ENCODE measurements at regions of chr5 and their contacts with region 1.

Region 1: DNA sequence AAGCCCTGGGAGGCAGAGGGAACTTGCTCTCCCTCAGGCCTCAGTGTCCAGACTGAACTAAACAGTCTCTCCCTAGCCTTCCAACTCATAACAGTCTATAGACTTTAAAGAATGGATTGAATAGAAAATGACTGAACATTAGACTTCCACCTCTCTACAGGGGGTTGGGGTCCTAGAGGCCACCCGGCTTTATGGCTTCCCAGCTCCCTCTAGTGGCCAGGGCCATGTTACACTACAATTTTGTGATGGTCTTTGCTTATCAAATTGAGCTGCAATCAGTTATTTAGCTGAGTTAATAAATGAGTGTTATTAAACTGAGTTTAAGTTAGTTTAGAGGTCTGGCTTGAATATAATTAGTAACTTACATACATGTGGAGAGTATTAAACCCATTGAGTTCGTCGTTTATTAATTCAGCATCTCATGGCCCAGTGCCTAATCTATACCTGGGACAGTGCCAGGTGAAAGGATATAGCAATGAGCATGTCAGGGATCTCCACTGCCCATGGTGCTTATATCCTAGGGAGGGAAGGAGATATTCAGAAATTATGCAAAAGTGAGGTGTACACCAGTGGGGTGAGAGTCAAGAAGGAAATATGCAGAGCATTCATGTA is 105.2 kb downstream of the SH3TC2 start:
- DNase-seq: peak; percentile 33
- H3K4me3 ChIP-seq: no peak overlapping the region
- H3K27ac ChIP-seq: no peak overlapping the region
- H3K4me1 ChIP-seq: peaks cover 10% of the 10 kb centered on the region
- H3K27me3 ChIP-seq: no peaks in the 10 kb centered on the region
- CTCF ChIP-seq: peak; percentile 83

Region 2: GRCh38 chr5:148826053-148826738 is 131.5 kb before region 1 on chr5 and contains the start of gene ADRB2:
- intact Hi-C with region 1: loop called (anchors 10 kb)
- DNase-seq: peak; percentile 95
- H3K4me3 ChIP-seq: peak within 1 kb of the TSS; percentile 76
- H3K27ac ChIP-seq: peak within 1 kb of the TSS; percentile 96
- H3K4me1 ChIP-seq: peaks cover 53% of the 10 kb centered on the region
- H3K27me3 ChIP-seq: no peaks in the 10 kb centered on the region
- CTCF ChIP-seq: peak; percentile 8
- total RNA-seq, gene ADRB2: 5.1 TPM

Region 3: DNA sequence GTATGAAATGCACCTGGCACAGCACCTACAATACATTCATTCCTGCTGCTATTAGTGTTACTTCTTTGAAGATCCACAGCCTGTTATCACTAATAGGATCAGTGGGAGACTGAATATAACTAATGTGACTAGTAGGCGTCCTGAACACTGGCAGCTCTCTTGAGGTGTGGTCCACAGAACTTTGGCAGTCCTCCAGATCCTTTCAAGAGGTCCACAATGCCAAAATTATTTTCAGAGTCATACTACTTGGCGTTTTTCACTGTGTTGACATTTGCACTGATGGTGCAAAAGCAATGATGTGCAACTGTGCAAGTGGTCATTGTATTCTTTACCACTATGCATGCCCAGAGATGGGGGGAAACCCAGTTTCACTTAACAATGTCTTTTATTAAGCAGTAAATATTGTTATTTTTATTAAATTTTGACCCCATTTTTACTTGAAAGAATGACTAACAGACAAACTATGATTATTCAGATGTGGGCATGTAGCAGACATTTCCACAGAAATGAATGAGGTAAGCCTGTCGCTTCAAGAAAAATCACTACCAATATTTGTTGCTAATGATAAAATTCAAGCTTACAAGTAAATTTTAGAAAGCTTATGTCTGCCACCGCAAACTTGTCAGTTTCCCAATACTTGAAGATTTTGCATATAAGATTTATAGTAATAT is 82.4 kb before region 1 on chr5:
- intact Hi-C with region 1: no loop called
- DNase-seq: no peak
- H3K4me3 ChIP-seq: no peak overlapping the region
- H3K27ac ChIP-seq: peak overlapping the region; percentile 73
- H3K4me1 ChIP-seq: peaks cover 39% of the 10 kb centered on the region
- H3K27me3 ChIP-seq: no peaks in the 10 kb centered on the region
- CTCF ChIP-seq: no peak